Activated CD4-positive, alpha-beta T cell treated with anti-CD3 and anti-CD28 coated beads for 36 hours (primary cell): ENCODE measurements at regions of chr1 and their contacts with region 1.

Region 1: DNA sequence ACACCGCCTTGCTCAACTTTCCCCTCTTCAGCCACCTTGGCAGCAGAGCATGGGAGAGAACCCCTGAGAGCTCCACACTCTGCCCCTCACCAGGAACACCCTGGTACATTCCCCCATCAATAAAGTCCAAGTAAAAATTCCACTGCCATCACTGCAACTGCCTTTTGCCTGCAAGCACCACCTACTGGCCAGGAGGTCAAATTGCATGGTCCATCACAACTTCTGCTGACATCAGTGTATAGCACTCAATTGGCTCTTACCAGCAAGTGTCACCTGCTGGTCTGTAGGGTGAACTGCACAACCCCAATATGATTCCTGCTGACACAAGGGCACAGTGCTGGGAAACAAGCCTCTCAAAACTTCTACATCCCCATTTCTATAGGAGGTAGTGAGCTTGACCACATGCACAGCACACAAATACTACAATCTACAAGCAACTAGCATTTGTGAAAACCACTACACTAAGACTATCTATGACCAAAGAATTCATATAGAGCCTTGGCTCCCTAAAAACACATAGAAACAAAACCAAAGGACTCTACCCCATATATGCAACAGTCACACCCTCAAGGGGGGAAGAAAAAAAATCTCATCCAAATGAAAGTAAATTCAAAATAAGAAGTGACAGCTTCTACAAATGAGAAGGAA is 69.2 kb downstream of the FASLG start:
- DNase-seq: peak; percentile 71
- ATAC-seq: peak; percentile 96
- H3K4me3 Mint-ChIP-seq: no peak overlapping the region
- H3K27ac Mint-ChIP-seq: no peak overlapping the region
- H3K4me1 Mint-ChIP-seq: peaks cover 18% of the 10 kb centered on the region
- H3K27me3 Mint-ChIP-seq: no peaks in the 10 kb centered on the region

Region 2: GRCh38 chr1:172429331-172430127 is 298.6 kb before region 1 on chr1:
- CTCF ChIA-PET with region 1: interaction called, 7 read pairs
- POLR2A ChIA-PET with region 1: no interaction called
- intact Hi-C with region 1: loop called in 1 of 2 experiments (anchors 1 kb)
- DNase-seq: peak; percentile 66
- ATAC-seq: peak; percentile 71
- H3K4me3 Mint-ChIP-seq: no peak overlapping the region
- H3K27ac Mint-ChIP-seq: no peak overlapping the region
- H3K4me1 Mint-ChIP-seq: peaks cover 30% of the 10 kb centered on the region
- H3K27me3 Mint-ChIP-seq: no peaks in the 10 kb centered on the region

Region 3: DNA sequence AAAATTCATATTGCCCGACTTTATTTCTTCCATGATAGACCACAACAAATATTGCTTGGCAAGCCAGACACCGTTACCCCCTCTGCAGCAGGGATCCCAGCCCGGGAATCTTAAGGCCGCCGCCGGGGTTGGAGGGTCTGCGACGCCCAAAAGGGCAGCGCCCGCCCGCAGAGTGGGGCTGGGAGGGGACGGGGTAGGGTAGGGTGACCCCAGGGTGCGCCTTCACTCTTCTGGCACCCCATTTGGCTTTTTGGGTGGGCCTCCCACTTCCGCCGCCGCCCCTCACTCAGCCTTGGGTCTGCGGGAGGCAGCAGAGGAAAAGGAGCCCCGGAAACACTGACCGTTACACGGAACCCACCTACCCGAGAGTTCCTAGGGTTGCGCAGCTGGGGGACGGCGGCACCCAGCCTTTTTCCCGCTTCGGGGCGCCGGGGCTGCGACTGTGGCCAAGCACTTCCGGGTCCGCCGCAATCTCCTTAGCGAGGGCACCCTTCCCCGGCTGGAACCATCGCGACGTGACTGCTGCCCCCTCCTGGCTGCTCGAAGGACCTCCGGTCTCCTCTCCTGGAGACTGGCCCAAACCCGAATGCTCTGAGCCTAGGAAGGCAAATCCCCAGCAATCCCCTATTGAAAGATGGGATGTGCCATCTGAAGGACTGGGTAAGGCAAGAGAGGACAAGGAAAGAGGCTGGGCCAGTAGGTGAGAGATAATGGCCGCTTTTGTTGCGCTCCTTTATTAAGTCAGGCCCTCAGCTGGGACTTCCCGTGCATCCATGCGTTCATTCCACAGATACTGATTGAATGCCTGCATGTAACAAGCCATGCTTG is 284.2 kb before region 1 on chr1 and contains the start of gene PIGC:
- CTCF ChIA-PET with region 1: interaction called, 24 read pairs
- POLR2A ChIA-PET with region 1: no interaction called
- intact Hi-C with region 1: no loop called
- DNase-seq: peak; percentile 97
- ATAC-seq: peak; percentile 99
- H3K4me3 Mint-ChIP-seq: peak within 1 kb of the TSS; percentile 85
- H3K27ac Mint-ChIP-seq: peak within 1 kb of the TSS; percentile 91
- H3K4me1 Mint-ChIP-seq: peaks cover 31% of the 10 kb centered on the region
- H3K27me3 Mint-ChIP-seq: no peaks in the 10 kb centered on the region
- total RNA-seq, gene PIGC: 14.7 to 17.1 TPM

Region 4: DNA sequence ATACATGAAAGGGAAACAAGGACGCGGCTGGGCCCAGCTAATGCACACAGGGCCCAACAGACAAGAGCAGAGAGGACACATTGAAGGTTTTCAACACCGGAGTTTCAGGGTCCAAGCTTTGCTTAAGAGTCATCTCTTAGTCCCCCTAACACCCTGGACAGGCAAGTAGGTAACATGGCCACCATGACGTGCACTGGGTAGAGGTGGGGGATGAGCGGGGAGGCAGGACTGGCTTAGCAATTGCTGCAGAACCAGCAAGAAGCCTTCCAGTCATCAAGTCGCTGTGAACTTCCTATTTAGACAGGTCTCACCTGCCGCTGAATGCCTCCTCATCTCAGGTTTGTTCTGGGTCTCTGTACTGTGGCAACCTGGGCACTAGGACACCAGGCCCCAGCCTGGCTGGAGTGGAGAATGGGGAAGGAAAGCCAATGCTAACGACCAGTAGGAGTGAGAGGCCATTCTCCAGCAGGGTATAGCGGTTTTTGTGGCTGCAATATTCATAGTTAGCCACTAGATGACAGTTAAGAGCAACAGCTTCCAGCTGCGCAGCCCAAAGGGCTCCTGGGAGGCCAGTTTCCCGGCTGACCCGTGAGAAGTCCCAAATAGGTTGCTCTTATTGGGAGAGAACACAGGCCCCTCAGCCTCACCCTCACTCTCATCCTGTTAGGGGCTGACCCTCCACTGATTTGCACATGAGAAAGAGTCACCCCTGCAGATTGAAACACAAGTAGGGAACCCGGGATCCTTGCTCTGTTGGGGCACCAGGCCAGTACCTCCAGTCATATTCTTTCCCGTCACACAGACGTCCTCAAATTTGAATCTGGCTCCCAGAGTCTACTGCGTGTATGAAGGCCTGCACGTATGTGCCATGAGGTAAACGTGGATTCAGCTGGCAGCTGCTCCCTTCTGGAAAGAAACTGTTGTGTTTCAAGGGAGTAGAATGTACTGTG is 278.2 kb before region 1 on chr1:
- CTCF ChIA-PET with region 1: interaction called, 24 read pairs
- POLR2A ChIA-PET with region 1: no interaction called
- intact Hi-C with region 1: loop called (anchors 1 to 2 kb)
- DNase-seq: peak; percentile 57
- ATAC-seq: peak; percentile 78
- H3K4me3 Mint-ChIP-seq: no peak overlapping the region
- H3K27ac Mint-ChIP-seq: no peak overlapping the region
- H3K4me1 Mint-ChIP-seq: peaks cover 23% of the 10 kb centered on the region
- H3K27me3 Mint-ChIP-seq: no peaks in the 10 kb centered on the region

Region 5: GRCh38 chr1:172513479-172513878 is 214.6 kb before region 1 on chr1:
- CTCF ChIA-PET with region 1: interaction called, 11 read pairs
- POLR2A ChIA-PET with region 1: no interaction called
- intact Hi-C with region 1: no loop called
- DNase-seq: no peak
- ATAC-seq: no peak
- H3K4me3 Mint-ChIP-seq: no peak overlapping the region
- H3K27ac Mint-ChIP-seq: no peak overlapping the region
- H3K4me1 Mint-ChIP-seq: no peaks in the 10 kb centered on the region
- H3K27me3 Mint-ChIP-seq: peaks cover 2% of the 10 kb centered on the region

Region 6: DNA sequence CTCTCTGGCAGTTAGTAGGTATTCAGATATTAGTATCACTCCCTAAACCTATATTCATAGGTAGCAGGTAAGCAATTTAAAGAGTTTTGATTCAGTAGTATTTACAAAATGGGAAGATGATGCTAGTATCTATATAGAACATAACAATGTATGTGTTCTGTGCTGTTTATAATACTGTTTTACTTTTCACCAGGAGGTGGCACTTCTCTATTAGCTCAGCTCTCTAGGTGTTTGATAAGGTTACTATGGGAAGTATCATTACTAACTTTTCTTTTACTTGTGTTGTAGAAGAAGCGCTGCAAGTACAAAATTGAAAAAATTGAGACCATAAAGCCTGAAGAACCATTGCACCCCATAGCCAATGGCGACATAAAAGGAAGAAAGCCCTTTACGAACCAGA is 118.6 kb before region 1 on chr1:
- CTCF ChIA-PET with region 1: interaction called, 196 read pairs
- POLR2A ChIA-PET with region 1: no interaction called
- intact Hi-C with region 1: loop called in 1 of 2 experiments (anchors 1 kb)
- DNase-seq: no peak
- ATAC-seq: no peak
- H3K4me3 Mint-ChIP-seq: no peak overlapping the region
- H3K27ac Mint-ChIP-seq: no peak overlapping the region
- H3K4me1 Mint-ChIP-seq: peaks cover 7% of the 10 kb centered on the region
- H3K27me3 Mint-ChIP-seq: no peaks in the 10 kb centered on the region

Region 7: GRCh38 chr1:173355281-173356031 is 627.4 kb after region 1 on chr1:
- CTCF ChIA-PET with region 1: no interaction called
- POLR2A ChIA-PET with region 1: no interaction called
- intact Hi-C with region 1: no loop called
- DNase-seq: peak; percentile 13
- ATAC-seq: peak; percentile 71
- H3K4me3 Mint-ChIP-seq: no peak overlapping the region
- H3K27ac Mint-ChIP-seq: no peak overlapping the region
- H3K4me1 Mint-ChIP-seq: peaks cover 26% of the 10 kb centered on the region
- H3K27me3 Mint-ChIP-seq: no peaks in the 10 kb centered on the region